T-cell (primary cell): ENCODE measurements at regions of chr9 and their contacts with region 1.

Region 1: DNA sequence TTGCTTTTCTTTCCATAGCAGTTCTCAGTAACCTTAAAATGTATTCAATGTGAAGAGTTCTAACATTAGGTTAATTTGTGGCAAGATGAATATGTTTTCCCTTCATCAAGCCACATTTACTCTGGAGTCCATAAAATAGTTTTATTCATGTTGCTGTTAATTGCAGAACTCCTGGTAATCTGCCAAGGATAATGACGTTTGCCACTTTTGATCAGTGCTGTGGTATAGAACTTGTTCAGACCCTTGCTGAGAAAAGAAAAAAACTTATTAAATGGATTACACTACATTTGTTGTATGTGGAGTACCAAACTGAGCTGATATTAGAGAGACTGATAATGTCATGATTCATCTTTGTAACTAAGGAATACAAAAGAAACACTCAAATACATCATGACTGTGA is 212.4 kb upstream of the DMAC1 start:
- DNase-seq: no peak
- ATAC-seq: no peak
- H3K4me3 ChIP-seq: no peak overlapping the region
- H3K4me3 Mint-ChIP-seq: no peak overlapping the region
- H3K27ac ChIP-seq: no peak overlapping the region
- H3K27ac Mint-ChIP-seq: no peak overlapping the region
- H3K4me1 ChIP-seq: no peaks in the 10 kb centered on the region
- H3K4me1 Mint-ChIP-seq: no peaks in the 10 kb centered on the region
- H3K27me3 ChIP-seq: peaks cover 0 to 2% of the 10 kb centered on the region in 2 experiments
- H3K27me3 Mint-ChIP-seq: no peaks in the 10 kb centered on the region

Region 2: DNA sequence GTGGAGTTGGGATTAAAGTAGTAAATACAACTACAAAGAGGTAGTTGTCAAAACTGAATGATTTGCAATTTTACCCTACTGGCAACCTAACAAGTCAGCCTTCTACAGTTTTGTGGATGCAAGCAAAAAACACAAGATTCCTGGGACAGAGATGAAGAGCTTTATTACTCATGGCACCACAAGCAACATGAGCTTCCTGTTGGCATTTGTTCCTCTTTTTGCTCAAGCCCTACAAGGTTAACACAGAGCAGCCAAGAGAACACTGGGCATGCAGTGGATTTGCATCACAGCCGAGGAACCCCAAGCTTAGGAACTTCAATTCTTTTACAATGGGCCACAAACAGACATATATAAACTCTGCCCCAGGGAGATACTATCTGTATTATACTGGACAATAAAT is 183.6 kb before region 1 on chr9:
- CTCF ChIA-PET with region 1: no interaction called
- POLR2A ChIA-PET with region 1: interaction called in 1 of 2 experiments, 11 read pairs
- DNase-seq: no peak
- ATAC-seq: no peak
- H3K4me3 ChIP-seq: no peak overlapping the region
- H3K4me3 Mint-ChIP-seq: no peak overlapping the region
- H3K27ac ChIP-seq: no peak overlapping the region
- H3K27ac Mint-ChIP-seq: no peak overlapping the region
- H3K4me1 ChIP-seq: no peaks in the 10 kb centered on the region
- H3K4me1 Mint-ChIP-seq: no peaks in the 10 kb centered on the region
- H3K27me3 ChIP-seq: no peaks in the 10 kb centered on the region
- H3K27me3 Mint-ChIP-seq: peaks cover 0 to 2% of the 10 kb centered on the region in 2 donors

Region 3: DNA sequence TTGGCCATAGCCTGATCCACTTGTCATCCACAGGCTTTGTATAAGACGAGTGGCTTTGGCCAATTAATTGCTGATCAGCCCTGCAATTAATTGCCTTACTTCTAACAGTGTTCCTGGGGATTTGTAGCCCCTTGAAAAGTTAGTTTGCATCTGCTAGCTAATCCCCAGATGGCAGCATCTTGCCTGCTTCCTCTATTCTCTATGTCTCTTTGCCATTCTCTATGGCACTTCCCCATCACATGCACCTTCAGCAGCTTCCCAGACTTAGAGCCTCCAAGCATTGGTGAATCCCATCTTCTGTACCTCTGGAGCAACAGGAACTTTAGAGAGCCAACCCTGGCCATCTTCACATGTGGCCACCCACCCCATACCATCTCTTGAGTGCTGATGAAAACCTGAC is 15.4 kb before region 1 on chr9:
- CTCF ChIA-PET with region 1: no interaction called
- POLR2A ChIA-PET with region 1: no interaction called
- DNase-seq: no peak
- ATAC-seq: no peak
- H3K4me3 ChIP-seq: no peak overlapping the region
- H3K4me3 Mint-ChIP-seq: no peak overlapping the region
- H3K27ac ChIP-seq: no peak overlapping the region
- H3K27ac Mint-ChIP-seq: no peak overlapping the region
- H3K4me1 ChIP-seq: no peaks in the 10 kb centered on the region
- H3K4me1 Mint-ChIP-seq: no peaks in the 10 kb centered on the region
- H3K27me3 ChIP-seq: no peaks in the 10 kb centered on the region
- H3K27me3 Mint-ChIP-seq: no peaks in the 10 kb centered on the region